ENCODE measurements at regions of chr10 and their contacts with region 1.

Region 1: GRCh38 chr10:114031073-114031972 is 12.3 kb upstream of the ADRB1 start:
- DNase-seq: no peak
- H3K4me3 ChIP-seq: no peak overlapping the region
- CTCF ChIP-seq: no peak

Region 2: GRCh38 chr10:113945075-113945686 is 86.1 kb before region 1 on chr10:
- in situ Hi-C with region 1: loop called (anchors 5 kb)
- DNase-seq: peak; percentile 38
- H3K4me3 ChIP-seq: no peak overlapping the region
- CTCF ChIP-seq: no peak

Region 3: GRCh38 chr10:113993489-113993991 is 37.8 kb before region 1 on chr10:
- in situ Hi-C with region 1: no loop called
- DNase-seq: peak; percentile 73
- H3K4me3 ChIP-seq: no peak overlapping the region
- CTCF ChIP-seq: peak; percentile 23

Region 4: DNA sequence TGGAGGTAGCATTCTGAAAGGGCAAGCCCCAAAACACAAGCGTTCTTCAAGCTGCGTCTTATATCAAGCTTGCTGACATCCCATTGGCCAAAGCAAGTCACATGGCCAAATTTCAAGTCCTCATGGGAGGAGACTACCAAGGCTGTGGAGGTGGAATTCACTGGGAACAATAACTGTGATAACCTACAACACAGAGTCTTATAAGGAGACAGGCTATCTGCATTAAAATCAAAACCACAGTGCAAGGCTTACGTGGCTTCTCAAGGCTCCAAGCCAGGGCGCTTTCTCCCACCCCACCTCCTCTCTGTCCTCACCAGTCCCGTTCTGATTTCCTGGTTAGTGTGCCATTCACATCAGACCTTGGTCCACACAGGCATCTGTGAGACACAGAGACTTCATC is 51.7 kb after region 1 on chr10:
- in situ Hi-C with region 1: no loop called
- DNase-seq: no peak
- H3K4me3 ChIP-seq: no peak overlapping the region
- CTCF ChIP-seq: no peak